Transverse colon (tissue), 4 donors: ENCODE measurements at regions of chrX and their contacts with region 1.

Region 1: DNA sequence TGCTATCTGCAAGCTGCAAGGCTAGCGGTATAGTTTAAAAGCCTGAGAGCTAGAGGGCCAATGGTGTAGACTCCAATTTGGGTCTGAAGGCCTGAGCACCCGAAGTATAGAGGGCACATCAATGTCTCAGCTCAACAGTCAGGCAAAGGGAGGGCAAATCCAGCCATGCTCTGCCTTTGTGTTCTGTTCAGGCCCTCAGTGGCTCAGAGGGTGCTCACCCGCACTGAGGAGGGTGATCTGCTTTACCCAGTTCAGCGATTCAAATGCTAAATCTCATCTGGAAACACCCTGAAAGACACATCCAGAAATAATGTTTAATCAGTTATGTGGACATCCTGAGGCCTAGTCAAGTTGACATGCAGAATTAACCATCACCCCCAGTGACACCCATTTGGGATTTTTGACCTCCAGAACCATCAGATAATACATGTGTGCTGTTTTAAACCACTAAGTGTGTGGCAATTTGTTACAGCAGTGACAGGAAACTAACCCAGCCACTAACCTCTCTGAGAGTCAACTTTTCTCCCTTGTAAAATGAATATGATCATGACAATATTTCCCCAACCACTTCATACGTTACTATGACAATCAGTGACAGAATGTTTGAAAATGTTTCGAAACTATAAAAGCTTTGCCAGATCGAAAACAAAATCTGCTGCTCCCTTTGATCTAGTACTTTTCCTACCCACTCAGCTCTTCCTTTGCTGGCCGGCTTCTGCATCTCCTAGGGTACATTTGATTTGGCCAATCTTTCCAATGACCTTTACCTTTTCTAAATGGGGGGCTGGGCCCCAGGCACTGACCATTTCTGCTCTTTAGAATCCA is 8.4 kb upstream of the TBL1X start:
- DNase-seq: no peak
- H3K4me3 ChIP-seq: no peak overlapping the region
- H3K27ac ChIP-seq: no peak overlapping the region
- H3K4me1 ChIP-seq: no peaks in the 10 kb centered on the region
- H3K27me3 ChIP-seq: no peaks in the 10 kb centered on the region
- CTCF ChIP-seq: no peak
- EP300 ChIP-seq: no peak
- POLR2A ChIP-seq: no peak

Region 2: GRCh38 chrX:9352694-9353411 is 103.6 kb before region 1 on chrX:
- in situ Hi-C with region 1: loop called (anchors 10 to 25 kb)
- intact Hi-C with region 1: no loop called
- DNase-seq: peak; percentile 41
- H3K4me3 ChIP-seq: no peak overlapping the region
- H3K27ac ChIP-seq: peak overlapping the region in 3 of 4 donors; percentile 12 to 30 (median 23)
- H3K4me1 ChIP-seq: no peaks in the 10 kb centered on the region
- H3K27me3 ChIP-seq: no peaks in the 10 kb centered on the region
- CTCF ChIP-seq: no peak
- EP300 ChIP-seq: no peak
- POLR2A ChIP-seq: no peak